GM18951 (cell line): ENCODE measurements at regions of chr4 and their contacts with region 1.

Region 1: GRCh38 chr4:164012396-164013027 is 518.0 kb downstream of the TMA16 start:
- POLR2A ChIP-seq: no peak

Region 2: GRCh38 chr4:163544407-163545038 is 468.0 kb before region 1 on chr4:
- in situ Hi-C with region 1: loop called (anchors 25 kb)
- POLR2A ChIP-seq: no peak

Region 3: DNA sequence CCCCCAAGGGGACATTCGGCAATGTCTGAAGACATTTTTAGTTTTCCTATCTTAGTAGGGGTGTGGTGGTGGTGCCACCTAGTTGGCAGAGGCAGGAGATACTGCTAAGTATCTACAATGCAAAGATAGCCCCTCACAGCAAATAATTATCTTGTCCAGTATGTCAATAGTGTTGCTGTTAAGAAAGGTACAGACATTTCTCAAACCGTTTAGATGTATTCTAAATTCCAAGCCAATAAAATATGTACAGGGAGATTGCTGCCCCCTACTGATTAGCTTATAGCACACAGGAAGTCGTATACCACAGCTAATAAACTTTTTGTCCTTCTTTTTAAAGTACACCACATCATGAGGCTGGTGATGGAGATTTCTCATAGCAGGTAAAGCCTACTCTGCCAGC is 257.5 kb before region 1 on chr4:
- in situ Hi-C with region 1: loop called (anchors 25 kb)
- POLR2A ChIP-seq: no peak

Region 4: GRCh38 chr4:163815776-163816175 is 196.7 kb before region 1 on chr4:
- in situ Hi-C with region 1: no loop called
- POLR2A ChIP-seq: no peak

Region 5: DNA sequence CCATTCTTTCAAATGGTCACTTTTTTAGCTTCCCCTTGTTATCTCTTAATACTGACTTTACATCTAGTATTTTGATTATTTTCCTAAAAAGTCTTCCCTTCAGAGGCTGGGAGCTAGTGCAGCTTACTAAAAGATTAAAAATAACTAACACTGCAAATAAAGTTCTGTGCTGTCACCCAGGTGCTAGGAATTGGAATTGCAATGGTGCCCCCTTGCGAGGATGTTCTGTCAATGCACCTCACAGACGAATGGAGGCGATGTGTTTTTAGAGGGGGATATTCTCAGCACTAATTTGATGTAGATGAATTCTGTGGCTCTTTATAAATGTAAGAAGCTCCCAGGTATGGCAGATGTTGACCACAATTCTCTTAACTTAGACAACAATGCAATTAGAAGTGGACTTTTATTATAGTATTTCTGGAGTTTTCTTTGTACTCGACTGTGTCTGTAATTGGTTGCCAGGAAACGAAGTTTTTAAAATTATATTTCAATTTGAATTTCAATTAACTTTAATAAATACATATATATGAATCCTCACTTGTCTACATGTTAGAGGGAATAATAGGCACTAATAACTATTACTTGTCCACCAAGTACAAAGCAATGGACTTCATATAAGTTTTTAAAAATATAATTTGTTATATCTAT is 719.4 kb after region 1 on chr4:
- in situ Hi-C with region 1: loop called (anchors 25 kb)
- POLR2A ChIP-seq: no peak